Mammary epithelial cell (primary cell): ENCODE measurements at regions of chr18 and their contacts with region 1.

Region 1: DNA sequence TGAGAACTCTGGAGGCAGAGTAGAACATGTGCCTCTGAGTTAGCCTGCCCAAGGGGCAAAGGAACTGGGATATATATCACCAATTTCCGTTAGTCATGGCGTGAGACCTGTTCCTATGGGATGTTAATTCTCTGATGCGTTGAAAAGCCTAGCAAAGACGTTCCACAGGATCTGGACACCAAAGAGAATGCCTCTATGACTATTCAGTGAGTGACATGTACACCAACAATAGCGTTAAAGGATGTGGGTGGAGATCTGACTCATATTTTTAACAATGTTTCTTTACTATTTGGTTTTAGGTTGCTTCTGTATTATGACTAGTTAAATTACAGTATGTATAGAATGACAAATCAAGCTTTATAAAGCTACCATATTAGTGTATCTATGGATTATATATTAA is 320.9 kb upstream of the MC4R start:
- DNase-seq: peak; percentile 63
- H3K4me3 ChIP-seq: no peak overlapping the region
- H3K27ac ChIP-seq: no peak overlapping the region
- H3K4me1 ChIP-seq: peaks cover 6% of the 10 kb centered on the region
- H3K27me3 ChIP-seq: no peaks in the 10 kb centered on the region
- CTCF ChIP-seq: no peak

Region 2: DNA sequence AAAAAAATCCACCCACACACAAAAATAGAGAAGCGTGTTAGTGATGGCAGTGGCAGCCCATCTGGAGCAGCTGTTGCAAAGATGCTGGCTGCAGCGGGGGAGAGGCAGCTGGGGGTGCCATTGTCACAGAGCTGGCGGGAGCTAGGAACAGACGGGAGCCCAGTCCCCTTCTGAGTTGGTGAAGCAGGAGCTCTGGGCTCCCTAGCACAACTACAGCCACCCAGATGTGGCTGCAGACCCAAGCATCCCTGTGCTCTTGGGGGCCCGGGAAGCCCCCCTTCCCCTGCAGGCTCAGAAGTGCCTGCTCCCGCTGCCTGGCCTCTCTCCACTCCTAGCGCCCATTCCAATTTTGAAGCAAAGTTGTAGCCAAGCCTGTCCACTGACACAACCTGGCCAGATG is 45.8 kb after region 1 on chr18:
- CTCF ChIA-PET with region 1: no interaction called
- dilution Hi-C with region 1: no loop called
- in situ Hi-C with region 1: no loop called
- intact Hi-C with region 1: no loop called
- DNase-seq: no peak
- H3K4me3 ChIP-seq: no peak overlapping the region
- H3K27ac ChIP-seq: no peak overlapping the region
- H3K4me1 ChIP-seq: no peaks in the 10 kb centered on the region
- H3K27me3 ChIP-seq: no peaks in the 10 kb centered on the region
- CTCF ChIP-seq: no peak

Region 3: GRCh38 chr18:61019338-61020301 is 326.2 kb after region 1 on chr18:
- CTCF ChIA-PET with region 1: no interaction called
- dilution Hi-C with region 1: no loop called
- in situ Hi-C with region 1: no loop called
- intact Hi-C with region 1: loop called (anchors 2 kb)
- DNase-seq: no peak
- H3K4me3 ChIP-seq: no peak overlapping the region
- H3K27ac ChIP-seq: no peak overlapping the region
- H3K4me1 ChIP-seq: no peaks in the 10 kb centered on the region
- H3K27me3 ChIP-seq: peaks cover 1% of the 10 kb centered on the region
- CTCF ChIP-seq: no peak